PC-3 (cell line): ENCODE measurements at regions of chr2 and their contacts with region 1.

Region 1: GRCh38 chr2:9555297-9556141 is at the start of gene ADAM17:
- DNase-seq: peak; percentile 98
- ATAC-seq: peak; percentile 86
- H3K4me3 ChIP-seq: peak within 1 kb of the TSS; percentile 96
- H3K27ac ChIP-seq: peak within 1 kb of the TSS; percentile 92
- H3K4me1 ChIP-seq: peaks cover 45% of the 10 kb centered on the region
- H3K27me3 ChIP-seq: no peaks in the 10 kb centered on the region
- CTCF ChIP-seq: peak; percentile 55
- total RNA-seq, gene ADAM17: 23.0 and 34.3 TPM in 2 replicates

Region 2: GRCh38 chr2:9613291-9613690 is 57.8 kb after region 1 on chr2:
- CTCF ChIA-PET with region 1: no interaction called
- POLR2A ChIA-PET with region 1: no interaction called
- intact Hi-C with region 1: loop called (anchors 5 kb)
- DNase-seq: peak; percentile 43
- ATAC-seq: no peak; the same call in 1 of the 2 replicates
- H3K4me3 ChIP-seq: no peak overlapping the region
- H3K27ac ChIP-seq: no peak overlapping the region
- H3K4me1 ChIP-seq: peaks cover 23% of the 10 kb centered on the region
- H3K27me3 ChIP-seq: no peaks in the 10 kb centered on the region
- CTCF ChIP-seq: no peak

Region 3: GRCh38 chr2:9738535-9739496 is 183.3 kb after region 1 on chr2:
- CTCF ChIA-PET with region 1: no interaction called
- POLR2A ChIA-PET with region 1: no interaction called
- intact Hi-C with region 1: no loop called
- DNase-seq: no peak
- ATAC-seq: no peak
- H3K4me3 ChIP-seq: no peak overlapping the region
- H3K27ac ChIP-seq: no peak overlapping the region
- H3K4me1 ChIP-seq: no peaks in the 10 kb centered on the region
- H3K27me3 ChIP-seq: no peaks in the 10 kb centered on the region
- CTCF ChIP-seq: no peak

Region 4: DNA sequence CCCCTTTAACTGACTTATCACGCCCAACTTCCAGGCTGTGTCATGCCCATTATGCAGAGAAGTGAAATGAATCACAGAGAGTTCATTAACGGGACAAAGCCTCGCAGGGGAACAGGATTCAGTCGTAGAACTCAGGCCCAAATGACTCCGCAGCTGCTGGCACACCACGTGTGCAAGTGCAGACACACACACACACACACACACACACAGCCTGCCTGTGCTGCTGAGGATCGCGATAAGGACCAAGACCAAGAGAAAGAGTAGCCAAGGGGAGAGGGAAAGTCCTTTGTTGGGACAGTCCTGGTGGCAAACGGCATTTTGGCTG is 197.7 kb after region 1 on chr2:
- CTCF ChIA-PET with region 1: no interaction called
- POLR2A ChIA-PET with region 1: interaction called, 6 read pairs
- intact Hi-C with region 1: loop called (anchors 5 kb)
- DNase-seq: peak; percentile 94
- ATAC-seq: peak; percentile 84
- H3K4me3 ChIP-seq: peak overlapping the region; percentile 66
- H3K27ac ChIP-seq: peak overlapping the region; percentile 99
- H3K4me1 ChIP-seq: peaks cover 43% of the 10 kb centered on the region
- H3K27me3 ChIP-seq: no peaks in the 10 kb centered on the region
- CTCF ChIP-seq: no peak

Region 5: GRCh38 chr2:9782197-9782719 is 226.7 kb after region 1 on chr2:
- CTCF ChIA-PET with region 1: interaction called, 3 read pairs
- POLR2A ChIA-PET with region 1: interaction called, 3 read pairs
- intact Hi-C with region 1: loop called (anchors 2 kb)
- DNase-seq: peak; percentile 81
- ATAC-seq: peak; percentile 87
- H3K4me3 ChIP-seq: peak overlapping the region; percentile 61
- H3K27ac ChIP-seq: peak overlapping the region; percentile 89
- H3K4me1 ChIP-seq: peaks cover 14% of the 10 kb centered on the region
- H3K27me3 ChIP-seq: no peaks in the 10 kb centered on the region
- CTCF ChIP-seq: peak; percentile 67